ENCODE measurements at regions of chr17 and their contacts with region 1.

Region 1: GRCh38 chr17:50919321-50920085 is 53.3 kb upstream of the TOB1 start:
- DNase-seq: peak; percentile 91
- H3K4me3 Mint-ChIP-seq: peak overlapping the region; percentile 50
- H3K27ac Mint-ChIP-seq: peak overlapping the region; percentile 88
- H3K4me1 Mint-ChIP-seq: peaks cover 32% of the 10 kb centered on the region
- H3K27me3 Mint-ChIP-seq: no peaks in the 10 kb centered on the region

Region 2: DNA sequence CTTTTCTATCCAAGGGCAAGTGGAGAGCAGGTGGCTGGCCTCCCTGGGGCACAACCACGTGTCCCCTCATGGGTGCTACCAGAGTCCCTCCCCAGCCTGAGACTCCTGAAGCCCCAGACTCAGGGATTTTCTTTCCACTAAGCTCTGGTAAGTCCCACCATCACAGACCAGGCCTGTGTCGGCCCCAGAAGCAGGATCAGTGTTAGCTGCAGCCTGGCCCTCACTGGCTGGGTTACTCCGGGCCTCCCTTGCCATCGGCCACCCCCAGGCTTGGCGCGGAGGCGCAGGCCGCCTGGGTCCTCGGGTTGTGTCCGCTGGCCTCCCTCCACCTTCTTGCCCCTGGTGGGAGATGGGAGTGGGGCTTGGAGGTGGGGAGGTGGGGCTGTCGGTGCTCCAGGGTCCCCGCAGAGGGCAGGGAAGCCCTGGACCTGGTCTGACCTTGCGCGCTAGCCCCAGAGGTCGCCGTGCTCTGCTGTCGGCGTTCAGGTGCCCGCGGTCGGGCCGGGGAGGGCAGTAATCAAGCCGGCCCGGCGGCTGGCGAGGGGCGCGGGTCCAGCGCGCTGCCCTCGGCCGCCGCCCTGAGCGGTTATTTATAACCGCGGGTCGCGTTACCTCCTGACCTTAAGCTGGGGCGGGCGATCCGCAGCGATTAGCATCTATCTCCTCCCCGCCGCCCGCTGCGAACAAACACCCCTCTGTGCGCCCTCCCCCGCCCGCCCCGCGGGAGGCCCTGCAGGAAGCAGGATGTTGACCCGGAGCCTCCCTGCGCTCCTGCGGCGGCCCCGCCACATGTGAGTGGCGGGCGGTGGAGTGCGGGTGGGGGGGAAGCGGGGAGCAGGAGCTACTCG is 24.8 kb after region 1 on chr17:
- CTCF ChIA-PET with region 1: no interaction called
- POLR2A ChIA-PET with region 1: no interaction called
- intact Hi-C with region 1: loop called (anchors 2 kb)
- DNase-seq: peak; percentile 88
- H3K4me3 Mint-ChIP-seq: peak overlapping the region; percentile 76
- H3K27ac Mint-ChIP-seq: peak overlapping the region; percentile 86
- H3K4me1 Mint-ChIP-seq: peaks cover 23% of the 10 kb centered on the region
- H3K27me3 Mint-ChIP-seq: no peaks in the 10 kb centered on the region